B cell (primary cell): ENCODE measurements at regions of chr1 and their contacts with region 1.

Region 1: GRCh38 chr1:9004700-9005394 is 21.4 kb downstream of the SLC2A7 start:
- DNase-seq: peak; percentile 83
- ATAC-seq: peak; percentile 79
- H3K4me3 ChIP-seq: no peak overlapping the region
- H3K4me3 Mint-ChIP-seq: no peak overlapping the region
- H3K27ac ChIP-seq: no peak overlapping the region
- H3K27ac Mint-ChIP-seq: peak overlapping the region; percentile 3
- H3K4me1 ChIP-seq: peaks cover 11 to 26% of the 10 kb centered on the region in 2 donors
- H3K4me1 Mint-ChIP-seq: peaks cover 33% of the 10 kb centered on the region
- H3K27me3 ChIP-seq: peaks cover 0 to 11% (median 2%) of the 10 kb centered on the region in 4 experiments
- H3K27me3 Mint-ChIP-seq: peaks cover 16% of the 10 kb centered on the region
- CTCF ChIP-seq: peak; percentile 91

Region 2: DNA sequence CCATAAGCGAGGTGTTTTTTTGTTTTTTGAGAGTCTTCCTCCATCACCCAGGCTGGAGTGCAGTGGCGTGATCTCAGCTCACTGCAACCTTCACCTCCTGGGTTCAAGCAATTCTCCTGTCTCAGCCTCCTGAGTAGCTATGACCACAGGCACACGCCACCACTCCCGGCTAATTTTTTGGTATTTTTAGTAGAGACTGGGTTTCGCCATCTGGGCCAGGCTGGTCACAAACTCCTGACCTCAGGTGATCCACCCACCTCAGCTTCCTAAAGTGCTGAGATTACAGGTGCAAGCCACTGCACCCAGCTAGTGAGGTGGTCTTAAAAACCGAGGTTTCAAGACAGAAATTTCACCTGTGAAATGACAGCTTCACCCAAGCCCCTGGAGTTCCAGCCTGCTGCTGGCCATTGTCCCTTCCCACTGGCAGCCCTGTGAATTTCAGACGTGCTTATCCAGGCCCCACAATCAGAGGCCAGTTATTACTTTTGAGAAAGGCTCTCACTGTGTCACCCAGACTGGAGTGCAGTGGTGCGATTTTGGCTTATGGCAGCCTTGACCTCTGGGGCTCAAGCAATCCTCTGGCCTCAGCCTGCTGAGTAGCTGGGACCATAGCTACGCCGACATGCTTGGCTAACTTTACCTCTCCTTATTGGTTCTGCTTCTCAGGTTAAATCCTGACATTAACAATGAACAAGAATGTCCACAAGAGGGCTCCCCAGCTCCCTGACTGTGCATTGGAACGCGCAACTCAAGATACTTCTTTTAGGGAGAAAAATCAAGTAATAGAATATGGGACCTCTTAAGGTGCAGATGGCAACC is 145.8 kb before region 1 on chr1:
- CTCF ChIA-PET with region 1: interaction called, 13 read pairs
- POLR2A ChIA-PET with region 1: no interaction called
- intact Hi-C with region 1: no loop called
- DNase-seq: peak; percentile 73
- ATAC-seq: peak; percentile 83
- H3K4me3 ChIP-seq: no peak overlapping the region
- H3K4me3 Mint-ChIP-seq: no peak overlapping the region
- H3K27ac ChIP-seq: no peak overlapping the region
- H3K27ac Mint-ChIP-seq: peak overlapping the region; percentile 18
- H3K4me1 ChIP-seq: peaks cover 7 to 8% of the 10 kb centered on the region in 2 donors
- H3K4me1 Mint-ChIP-seq: peaks cover 18% of the 10 kb centered on the region
- H3K27me3 ChIP-seq: no peaks in the 10 kb centered on the region
- H3K27me3 Mint-ChIP-seq: no peaks in the 10 kb centered on the region
- CTCF ChIP-seq: peak; percentile 77

Region 3: DNA sequence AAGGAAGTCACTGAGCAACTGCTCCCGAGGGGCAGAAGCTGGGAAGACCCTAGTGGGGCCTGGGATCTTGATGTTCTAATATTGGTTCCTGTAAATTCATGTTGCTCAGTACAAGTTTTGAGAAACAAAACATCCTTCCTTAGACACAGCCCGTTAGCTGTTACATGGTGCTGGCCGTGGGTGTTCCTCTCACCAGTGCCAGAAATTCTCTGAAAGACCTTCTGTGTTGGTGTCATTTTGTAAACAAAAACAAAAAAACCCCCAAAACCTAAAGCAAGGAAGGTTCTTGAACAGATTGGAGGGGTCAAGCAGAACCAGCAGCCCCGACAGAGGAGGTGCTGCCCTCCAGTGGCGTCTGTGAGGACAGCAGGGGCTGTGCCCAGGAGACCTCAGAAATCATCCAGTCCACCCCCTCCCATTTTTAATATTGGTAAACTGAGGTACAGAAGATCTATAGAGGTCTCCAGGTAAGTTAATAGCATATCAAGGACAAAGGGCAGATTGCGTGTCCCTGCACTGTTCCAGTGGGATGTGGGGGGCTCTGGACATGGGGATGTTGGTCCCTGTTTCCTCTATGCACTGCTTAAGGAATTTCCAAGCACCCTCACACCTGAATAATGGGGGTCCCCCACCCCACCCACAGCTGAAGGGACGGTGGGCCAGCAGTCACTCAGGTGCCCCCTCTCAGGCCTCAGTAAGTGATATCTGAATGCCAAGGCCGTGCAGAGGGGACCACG is 16.8 kb before region 1 on chr1:
- CTCF ChIA-PET with region 1: interaction called, 16 read pairs
- POLR2A ChIA-PET with region 1: no interaction called
- intact Hi-C with region 1: loop called (anchors 1 kb)
- DNase-seq: peak; percentile 66
- ATAC-seq: peak; percentile 92
- H3K4me3 ChIP-seq: no peak overlapping the region
- H3K4me3 Mint-ChIP-seq: peak overlapping the region; percentile 15
- H3K27ac ChIP-seq: no peak overlapping the region
- H3K27ac Mint-ChIP-seq: no peak overlapping the region
- H3K4me1 ChIP-seq: peaks cover 5 to 15% of the 10 kb centered on the region in 2 donors
- H3K4me1 Mint-ChIP-seq: peaks cover 9% of the 10 kb centered on the region
- H3K27me3 ChIP-seq: peaks cover 0 to 4% (median 0%) of the 10 kb centered on the region in 4 experiments
- H3K27me3 Mint-ChIP-seq: peaks cover 19% of the 10 kb centered on the region
- CTCF ChIP-seq: peak; percentile 97

Region 4: GRCh38 chr1:9037476-9038337 is 32.9 kb after region 1 on chr1:
- CTCF ChIA-PET with region 1: interaction called, 16 read pairs
- POLR2A ChIA-PET with region 1: no interaction called
- intact Hi-C with region 1: no loop called
- DNase-seq: peak; percentile 77
- ATAC-seq: peak; percentile 65
- H3K4me3 ChIP-seq: peak overlapping the region in 3 of 5 experiments; percentile 15 to 18 (median 16)
- H3K4me3 Mint-ChIP-seq: peak overlapping the region; percentile 77
- H3K27ac ChIP-seq: peak overlapping the region; percentile 86 to 91
- H3K27ac Mint-ChIP-seq: peak overlapping the region; percentile 86
- H3K4me1 ChIP-seq: peaks cover 25 to 36% of the 10 kb centered on the region in 2 donors
- H3K4me1 Mint-ChIP-seq: peaks cover 45% of the 10 kb centered on the region
- H3K27me3 ChIP-seq: no peaks in the 10 kb centered on the region
- H3K27me3 Mint-ChIP-seq: no peaks in the 10 kb centered on the region
- CTCF ChIP-seq: no peak

Region 5: DNA sequence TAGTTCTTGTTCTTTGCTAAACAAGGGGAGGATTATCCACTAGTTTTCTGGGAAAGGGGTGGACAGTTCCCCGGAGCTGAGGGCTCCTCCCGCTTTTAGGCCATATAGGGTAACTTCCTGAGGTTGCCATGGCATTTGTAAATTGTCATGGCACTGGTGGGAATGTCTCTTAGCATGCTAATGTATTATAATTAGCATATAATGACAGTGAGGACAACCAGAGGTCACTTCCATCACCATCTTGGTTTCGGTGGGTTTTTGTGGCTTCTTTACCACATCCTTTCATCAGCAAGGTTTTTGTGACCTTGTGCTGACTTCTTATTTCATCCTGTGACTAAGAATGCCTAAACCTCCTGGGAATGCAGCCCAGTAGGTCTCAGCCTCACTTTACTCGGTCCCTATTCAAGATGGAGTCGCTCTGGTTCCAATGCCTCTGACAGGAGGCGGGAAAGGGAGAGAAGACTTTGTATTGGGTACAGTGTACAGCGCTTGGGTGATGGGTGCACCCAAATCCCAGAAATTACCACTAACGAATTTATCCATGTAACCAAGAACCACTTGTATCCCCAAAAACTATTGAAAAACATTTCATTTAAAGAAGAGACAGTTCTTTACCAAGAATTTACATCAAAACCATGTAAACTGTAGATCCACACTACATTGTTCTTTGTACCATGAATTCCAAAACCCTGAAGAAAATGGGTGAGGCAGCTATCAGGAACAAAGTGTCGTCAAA is 73.3 kb after region 1 on chr1:
- CTCF ChIA-PET with region 1: interaction called, 10 read pairs
- POLR2A ChIA-PET with region 1: interaction called, 3 read pairs
- intact Hi-C with region 1: loop called (anchors 5 kb)
- DNase-seq: no peak
- ATAC-seq: peak; percentile 4
- H3K4me3 ChIP-seq: peak overlapping the region in 1 of 5 experiments; percentile 8
- H3K4me3 Mint-ChIP-seq: peak overlapping the region; percentile 70
- H3K27ac ChIP-seq: no peak overlapping the region
- H3K27ac Mint-ChIP-seq: peak overlapping the region; percentile 26
- H3K4me1 ChIP-seq: peaks cover 85 to 94% of the 10 kb centered on the region in 2 donors
- H3K4me1 Mint-ChIP-seq: peaks cover 80% of the 10 kb centered on the region
- H3K27me3 ChIP-seq: peaks cover 0 to 6% (median 3%) of the 10 kb centered on the region in 4 experiments
- H3K27me3 Mint-ChIP-seq: peaks cover 14% of the 10 kb centered on the region
- CTCF ChIP-seq: no peak